ENCODE measurements at regions of chr1 and their contacts with region 1.

Region 1: DNA sequence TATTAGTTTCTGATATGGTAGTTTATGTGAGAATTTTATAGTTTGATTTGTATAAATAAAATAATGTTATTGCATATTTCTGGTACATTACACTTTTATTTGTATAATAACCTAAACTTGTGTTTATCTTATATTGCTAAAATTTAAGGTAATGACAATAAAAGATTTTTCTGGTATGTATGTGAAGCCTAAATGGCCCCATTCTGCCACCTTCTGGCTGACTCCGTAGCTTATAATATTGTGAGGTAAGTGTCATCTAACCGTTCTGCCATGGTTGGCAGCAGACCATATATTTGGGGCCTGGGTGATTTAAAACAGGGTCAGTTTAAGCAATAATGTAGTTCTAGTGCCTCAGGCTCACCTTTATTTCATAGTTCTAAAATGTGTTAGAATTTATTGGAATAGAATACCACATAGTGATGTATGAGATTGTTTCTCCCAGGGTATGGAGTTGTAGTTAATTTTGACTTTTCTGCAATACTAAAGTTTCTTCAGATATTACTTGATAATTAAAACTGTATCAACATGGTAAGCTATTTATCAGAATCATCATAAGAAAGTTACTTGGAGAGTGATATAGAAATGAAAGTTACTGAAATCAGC is 21.2 kb upstream of the PRKACB start:
- DNase-seq: no peak
- ATAC-seq: peak; percentile 49
- H3K4me3 Mint-ChIP-seq: no peak overlapping the region
- H3K27ac Mint-ChIP-seq: no peak overlapping the region
- H3K4me1 Mint-ChIP-seq: no peaks in the 10 kb centered on the region
- H3K27me3 Mint-ChIP-seq: no peaks in the 10 kb centered on the region
- CTCF ChIP-seq: no peak

Region 2: DNA sequence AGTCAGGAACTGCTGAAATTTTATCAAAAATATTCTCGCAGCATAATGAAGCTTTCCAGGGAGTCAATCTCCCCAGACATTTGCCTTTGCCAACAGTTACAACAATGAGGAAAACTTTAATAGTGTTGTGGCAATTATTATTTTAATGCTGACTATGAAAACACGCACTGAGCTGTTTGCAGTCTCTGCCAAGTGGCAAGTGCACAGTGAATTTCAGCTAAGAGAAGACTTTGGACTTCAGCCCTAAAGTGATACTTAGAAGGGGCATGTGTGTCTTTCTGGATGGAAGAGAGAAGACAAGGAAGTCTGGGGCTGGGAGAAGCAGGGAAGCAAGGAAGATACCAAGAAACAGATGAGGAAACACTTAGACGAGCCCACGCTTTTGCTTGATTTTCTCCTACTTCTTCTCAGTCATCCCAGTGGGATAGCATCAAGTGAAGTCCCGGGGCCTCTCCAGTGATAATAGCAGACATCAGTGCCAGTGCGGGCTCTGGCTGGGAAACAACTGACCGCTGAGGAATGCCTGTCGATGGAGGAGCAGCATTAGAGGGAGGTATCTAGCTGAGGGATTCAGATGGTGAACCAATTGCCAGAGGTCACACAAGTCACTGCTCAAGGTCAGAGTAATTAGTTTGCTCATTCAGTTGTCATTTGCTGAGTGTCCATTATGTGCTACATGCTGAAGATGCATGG is 320.3 kb before region 1 on chr1:
- CTCF ChIA-PET with region 1: no interaction called
- POLR2A ChIA-PET with region 1: no interaction called
- intact Hi-C with region 1: no loop called
- DNase-seq: no peak
- ATAC-seq: no peak
- H3K4me3 Mint-ChIP-seq: no peak overlapping the region
- H3K27ac Mint-ChIP-seq: no peak overlapping the region
- H3K4me1 Mint-ChIP-seq: no peaks in the 10 kb centered on the region
- H3K27me3 Mint-ChIP-seq: no peaks in the 10 kb centered on the region
- CTCF ChIP-seq: no peak

Region 3: DNA sequence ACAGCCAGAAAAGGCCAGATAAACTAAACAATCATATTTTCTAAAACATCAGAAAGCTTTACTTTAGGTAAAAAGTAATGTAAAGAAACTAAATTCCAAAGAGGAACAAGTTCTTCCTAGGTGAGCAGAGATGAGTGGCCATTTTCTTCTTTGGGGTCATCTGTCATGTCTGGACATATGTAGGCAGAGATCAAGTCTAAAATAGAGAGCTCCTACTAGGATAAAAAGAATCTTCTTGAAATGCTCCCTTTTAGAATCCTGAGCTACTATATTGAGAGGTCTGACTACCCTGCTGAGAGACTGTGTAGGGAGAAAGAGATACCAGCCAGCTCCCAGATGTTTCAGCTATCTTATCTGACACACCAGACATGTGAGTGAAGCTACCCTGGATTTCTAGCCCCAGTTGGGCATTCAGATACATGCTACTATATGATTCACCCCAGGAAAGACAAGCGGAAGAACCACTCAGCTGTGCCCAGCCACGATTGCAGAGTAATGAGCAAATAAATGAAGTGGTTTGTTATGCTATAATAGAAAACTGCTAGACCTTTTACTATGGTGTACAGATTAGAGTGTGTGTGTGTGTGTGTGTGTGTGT is 204.1 kb before region 1 on chr1:
- CTCF ChIA-PET with region 1: no interaction called
- POLR2A ChIA-PET with region 1: no interaction called
- intact Hi-C with region 1: no loop called
- DNase-seq: no peak
- ATAC-seq: no peak
- H3K4me3 Mint-ChIP-seq: no peak overlapping the region
- H3K27ac Mint-ChIP-seq: no peak overlapping the region
- H3K4me1 Mint-ChIP-seq: no peaks in the 10 kb centered on the region
- H3K27me3 Mint-ChIP-seq: peaks cover 6% of the 10 kb centered on the region
- CTCF ChIP-seq: no peak

Region 4: GRCh38 chr1:83998498-83999315 is 124.2 kb before region 1 on chr1 and contains the start of gene TTLL7:
- CTCF ChIA-PET with region 1: no interaction called
- POLR2A ChIA-PET with region 1: no interaction called
- intact Hi-C with region 1: loop called (anchors 5 kb)
- DNase-seq: peak; percentile 65
- ATAC-seq: peak; percentile 86
- H3K4me3 Mint-ChIP-seq: peak within 1 kb of the TSS; percentile 82
- H3K27ac Mint-ChIP-seq: no peak within 1 kb of the TSS
- H3K4me1 Mint-ChIP-seq: peaks cover 13% of the 10 kb centered on the region
- H3K27me3 Mint-ChIP-seq: peaks cover 41% of the 10 kb centered on the region
- CTCF ChIP-seq: no peak
- total RNA-seq, gene TTLL7: 0.12 TPM in 1 of 2 replicates, not detected in the other

Region 5: GRCh38 chr1:84143796-84144565 is 21.1 kb after region 1 on chr1 and contains the start of gene PRKACB:
- CTCF ChIA-PET with region 1: no interaction called
- POLR2A ChIA-PET with region 1: no interaction called
- intact Hi-C with region 1: no loop called
- DNase-seq: no peak
- ATAC-seq: peak; percentile 86
- H3K4me3 Mint-ChIP-seq: peak within 1 kb of the TSS; percentile 89
- H3K27ac Mint-ChIP-seq: peak within 1 kb of the TSS; percentile 97
- H3K4me1 Mint-ChIP-seq: peaks cover 52% of the 10 kb centered on the region
- H3K27me3 Mint-ChIP-seq: no peaks in the 10 kb centered on the region
- CTCF ChIP-seq: no peak
- total RNA-seq, gene PRKACB: 30.0 and 33.0 TPM in 2 replicates

Measured in activated B cell treated with CpG ODN at 0.5 μM for 24 hours (primary cell).